Heart left ventricle (tissue), 16 donors: ENCODE measurements at regions of chr18 and their contacts with region 1.

Region 1: DNA sequence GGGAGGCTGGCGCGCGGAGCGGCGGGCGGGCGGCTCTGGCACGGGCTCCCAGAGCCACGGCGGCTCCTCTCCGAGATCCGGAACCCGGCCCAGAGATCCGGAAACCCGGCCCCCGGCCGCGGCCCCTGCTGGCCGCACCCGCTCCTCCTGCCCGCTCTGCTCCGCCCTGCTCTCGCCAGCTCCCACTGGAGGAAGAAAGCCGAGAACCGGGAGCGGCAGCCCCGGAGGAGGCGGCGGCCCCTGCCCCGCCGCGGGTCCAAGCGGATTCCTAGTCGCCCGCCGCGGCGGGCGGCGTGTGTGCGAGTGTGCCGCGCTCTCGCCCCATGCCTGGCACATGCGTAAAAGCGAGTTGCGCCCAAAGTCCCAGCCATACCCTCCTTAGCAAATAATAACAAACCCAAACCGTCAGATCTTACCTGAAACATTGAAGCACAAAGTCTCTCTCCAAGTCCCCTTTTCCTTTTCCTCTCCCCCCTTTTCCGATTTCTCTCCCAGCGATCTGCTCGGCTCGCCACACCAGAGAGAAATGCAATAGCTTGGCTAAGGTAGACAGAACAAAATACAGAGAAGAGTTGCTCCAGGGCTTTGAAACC is 108.7 kb upstream of the KCTD1 start:
- DNase-seq: peak; percentile 73 to 91 (median 84)
- ATAC-seq: peak; percentile 53 to 95 (median 86)
- H3K4me3 ChIP-seq: peak overlapping the region; percentile 64 to 92 (median 74)
- H3K27ac ChIP-seq: peak overlapping the region; percentile 52 to 92 (median 85)
- H3K4me1 ChIP-seq: peaks cover 0 to 27% (median 12%) of the 10 kb centered on the region in 12 donors
- H3K27me3 ChIP-seq: peaks cover 0 to 37% (median 3%) of the 10 kb centered on the region in 9 donors
- CTCF ChIP-seq: peak in 10 of 12 donors; percentile 12 to 66 (median 35)
- POLR2A ChIP-seq: peak in 1 of 2 donors; percentile 46

Region 2: GRCh38 chr18:26226229-26227005 is 430.6 kb before region 1 on chr18 and contains the start of gene TAF4B:
- intact Hi-C with region 1: loop called in 2 of 10 experiments (anchors 10 kb)
- DNase-seq: peak; percentile 93 to 97 (median 94)
- ATAC-seq: peak; percentile 95 to 99 (median 99)
- H3K4me3 ChIP-seq: peak within 1 kb of the TSS; percentile 38 to 94 (median 78)
- H3K27ac ChIP-seq: peak within 1 kb of the TSS in 11 of 12 donors; percentile 2 to 77 (median 64)
- H3K4me1 ChIP-seq: peaks cover 0 to 20% (median 8%) of the 10 kb centered on the region in 12 donors
- H3K27me3 ChIP-seq: no peaks in the 10 kb centered on the region
- CTCF ChIP-seq: no peak
- POLR2A ChIP-seq: no peak
- total RNA-seq, gene TAF4B: 0.76 to 3.6 (median 1.7) TPM

Region 3: GRCh38 chr18:26370037-26370436 is 287.0 kb before region 1 on chr18:
- intact Hi-C with region 1: no loop called
- DNase-seq: no peak
- ATAC-seq: no peak
- H3K4me3 ChIP-seq: no peak overlapping the region
- H3K27ac ChIP-seq: no peak overlapping the region
- H3K4me1 ChIP-seq: no peaks in the 10 kb centered on the region
- H3K27me3 ChIP-seq: no peaks in the 10 kb centered on the region
- CTCF ChIP-seq: no peak
- POLR2A ChIP-seq: no peak

Region 4: GRCh38 chr18:26405190-26405801 is 251.7 kb before region 1 on chr18:
- intact Hi-C with region 1: loop called in 2 of 10 experiments (anchors 5 to 10 kb)
- DNase-seq: peak in 4 of 5 donors; percentile 15 to 59 (median 42)
- ATAC-seq: peak; percentile 74 to 91 (median 82)
- H3K4me3 ChIP-seq: no peak overlapping the region
- H3K27ac ChIP-seq: no peak overlapping the region
- H3K4me1 ChIP-seq: no peaks in the 10 kb centered on the region
- H3K27me3 ChIP-seq: no peaks in the 10 kb centered on the region
- CTCF ChIP-seq: peak; percentile 14 to 59 (median 53)
- POLR2A ChIP-seq: no peak

Region 5: DNA sequence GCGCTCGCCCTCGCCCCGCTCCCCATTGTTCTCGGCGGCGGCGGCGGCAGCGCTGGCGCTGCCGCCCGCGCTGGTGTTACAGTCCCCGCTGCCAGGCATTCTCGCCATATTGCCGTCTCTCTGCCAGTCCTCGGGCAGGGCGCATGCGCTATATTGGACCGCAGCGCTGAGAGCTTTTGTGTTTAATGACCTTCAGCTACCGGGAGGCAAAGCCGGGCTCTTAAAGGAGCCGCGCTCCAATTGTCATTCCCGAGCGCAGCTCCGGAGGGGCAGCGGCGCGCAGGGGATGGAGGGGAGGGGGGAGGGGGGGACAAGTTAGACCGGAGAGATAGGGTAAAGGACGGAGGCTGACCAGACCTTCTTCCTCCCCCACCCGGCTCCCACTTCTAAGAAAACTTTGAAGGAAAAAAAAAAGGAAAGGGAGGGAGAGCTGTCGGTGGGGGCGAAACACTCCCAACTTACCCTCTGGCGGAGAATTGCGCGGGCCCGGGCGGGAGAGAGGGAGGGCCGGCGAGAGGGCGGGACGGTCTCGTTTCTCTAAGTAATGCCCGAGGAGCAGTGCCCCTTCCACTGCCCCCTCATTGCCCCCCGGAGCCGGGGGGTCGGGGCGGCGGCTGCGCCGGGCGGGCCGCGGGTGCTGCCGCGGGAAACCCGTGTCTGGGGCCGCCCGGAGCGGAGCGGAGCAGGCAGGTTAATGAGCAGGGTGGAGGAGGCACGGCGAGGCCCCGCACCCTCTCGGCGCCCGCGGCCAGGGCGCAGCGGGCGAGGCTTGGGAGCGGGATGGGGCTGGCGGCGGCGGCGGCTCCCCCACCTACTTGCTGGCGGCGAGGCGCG is 108.4 kb before region 1 on chr18 and contains the start of gene KCTD1:
- intact Hi-C with region 1: loop called in 6 of 10 experiments (anchors 2 to 10 kb)
- DNase-seq: peak; percentile 77 to 91 (median 83)
- ATAC-seq: peak; percentile 61 to 83 (median 78)
- H3K4me3 ChIP-seq: peak within 1 kb of the TSS; percentile 67 to 93 (median 77)
- H3K27ac ChIP-seq: peak within 1 kb of the TSS; percentile 48 to 83 (median 74)
- H3K4me1 ChIP-seq: peaks cover 0 to 56% (median 34%) of the 10 kb centered on the region in 12 donors
- H3K27me3 ChIP-seq: peaks cover 0 to 43% (median 14%) of the 10 kb centered on the region in 9 donors
- CTCF ChIP-seq: no peak
- POLR2A ChIP-seq: no peak
- total RNA-seq, gene KCTD1: 8.4 to 21.8 (median 10.0) TPM

Region 6: GRCh38 chr18:26593365-26594320 is 63.4 kb before region 1 on chr18:
- intact Hi-C with region 1: no loop called
- DNase-seq: no peak
- ATAC-seq: no peak
- H3K4me3 ChIP-seq: no peak overlapping the region
- H3K27ac ChIP-seq: no peak overlapping the region
- H3K4me1 ChIP-seq: no peaks in the 10 kb centered on the region
- H3K27me3 ChIP-seq: no peaks in the 10 kb centered on the region
- CTCF ChIP-seq: no peak
- POLR2A ChIP-seq: no peak

Region 7: GRCh38 chr18:26719900-26720299 is 62.9 kb after region 1 on chr18:
- intact Hi-C with region 1: no loop called
- DNase-seq: no peak
- ATAC-seq: no peak
- H3K4me3 ChIP-seq: no peak overlapping the region
- H3K27ac ChIP-seq: no peak overlapping the region
- H3K4me1 ChIP-seq: peaks cover 0 to 9% (median 0%) of the 10 kb centered on the region in 12 donors
- H3K27me3 ChIP-seq: peaks cover 0 to 3% (median 0%) of the 10 kb centered on the region in 9 donors
- CTCF ChIP-seq: no peak
- POLR2A ChIP-seq: no peak

Region 8: DNA sequence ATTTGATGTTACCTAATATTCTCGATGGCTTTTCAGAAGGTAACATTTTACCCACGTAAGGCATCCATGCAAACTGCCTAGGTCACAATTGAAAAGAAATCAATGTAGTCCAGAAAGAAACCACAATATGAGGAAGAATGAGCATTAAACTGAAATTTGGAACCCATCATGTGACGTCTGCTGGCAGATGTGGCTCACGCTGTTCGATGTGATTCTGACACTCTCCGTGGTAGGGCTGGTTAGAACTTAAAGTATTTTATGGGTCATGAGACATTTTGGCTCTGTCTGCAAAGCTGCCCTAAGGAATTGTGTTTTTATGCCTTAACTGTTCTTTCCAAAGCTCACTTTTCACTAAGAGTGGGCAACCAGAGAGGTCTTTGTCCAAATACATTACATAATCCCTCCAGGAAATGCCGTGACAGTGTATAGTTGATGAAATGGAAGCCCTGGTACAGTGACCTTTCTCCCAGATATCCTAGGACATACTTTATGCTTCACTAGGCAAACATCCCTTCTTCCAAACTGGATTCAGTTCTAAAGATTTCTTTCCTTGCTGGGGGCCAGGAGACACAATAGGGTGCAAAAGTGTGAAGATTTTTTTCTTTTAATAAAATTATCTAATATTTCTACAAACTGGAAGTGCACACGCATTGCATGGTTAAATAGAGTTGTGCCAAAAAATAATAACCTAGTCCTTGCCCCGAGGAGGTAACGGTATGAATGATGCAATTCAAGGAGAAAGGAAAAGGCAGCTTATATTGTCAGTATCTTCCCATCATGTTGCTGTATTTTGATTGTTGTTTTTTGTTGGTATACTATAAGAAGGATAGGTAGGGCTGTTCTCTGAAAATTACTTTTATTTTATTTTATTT is 89.5 kb after region 1 on chr18:
- intact Hi-C with region 1: loop called in 2 of 10 experiments (anchors 10 kb)
- DNase-seq: no peak
- ATAC-seq: peak in 1 of 4 donors; percentile 68
- H3K4me3 ChIP-seq: peak overlapping the region in 1 of 12 donors; percentile 19
- H3K27ac ChIP-seq: peak overlapping the region in 1 of 12 donors; percentile 13
- H3K4me1 ChIP-seq: peaks cover 0 to 12% (median 0%) of the 10 kb centered on the region in 12 donors
- H3K27me3 ChIP-seq: no peaks in the 10 kb centered on the region
- CTCF ChIP-seq: no peak
- POLR2A ChIP-seq: no peak